Heart right ventricle (tissue), 16 donors: ENCODE measurements at regions of chr1 and their contacts with region 1.

Region 1: DNA sequence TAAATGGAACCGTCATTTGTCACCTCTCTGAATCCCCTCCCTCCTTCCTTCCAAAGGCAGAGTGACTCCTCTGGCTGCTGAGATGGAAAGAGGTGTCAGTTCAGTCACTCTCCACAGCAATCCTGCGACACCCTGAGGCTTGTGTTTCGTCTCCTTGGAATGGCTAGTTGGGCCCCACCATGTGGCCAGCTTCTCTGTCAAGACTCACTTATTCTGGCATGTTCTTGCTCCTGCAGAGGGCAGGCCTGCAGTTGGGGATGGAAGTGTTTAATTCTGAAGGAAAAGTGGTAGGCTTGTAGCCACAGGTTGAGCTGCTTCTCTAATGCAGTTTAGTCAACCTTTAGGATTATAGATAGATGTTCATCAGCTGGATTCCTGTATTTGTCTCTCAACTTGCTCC is 149.6 kb downstream of the LMO4 start:
- DNase-seq: peak; percentile 19 to 27
- ATAC-seq: peak in 5 of 8 donors; percentile 42 to 75 (median 59)
- H3K4me3 ChIP-seq: no peak overlapping the region
- H3K27ac ChIP-seq: no peak overlapping the region
- H3K4me1 ChIP-seq: no peaks in the 10 kb centered on the region
- H3K27me3 ChIP-seq: no peaks in the 10 kb centered on the region
- CTCF ChIP-seq: peak in 5 of 9 donors; percentile 25 to 49 (median 45)

Region 2: DNA sequence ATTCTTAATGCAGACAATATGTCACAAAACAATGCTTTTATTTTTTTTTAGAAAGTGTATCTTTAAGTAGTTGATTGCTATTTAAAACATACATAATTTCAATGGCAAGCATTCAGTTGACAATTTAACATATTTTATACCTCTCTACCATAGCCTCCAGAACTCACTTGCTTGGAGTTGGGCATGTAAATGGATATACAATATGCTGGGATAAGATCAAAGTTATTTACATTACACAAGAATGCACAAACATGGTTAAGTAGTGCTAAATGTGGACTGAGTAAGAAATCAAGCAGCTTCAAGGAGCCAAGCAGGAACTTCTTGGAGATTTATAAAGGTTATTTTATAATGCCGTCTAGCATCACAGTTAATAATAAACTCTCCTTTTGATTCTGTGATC is 914.4 kb before region 1 on chr1:
- intact Hi-C with region 1: loop called in 1 of 10 experiments (anchors 5 kb)
- DNase-seq: no peak
- ATAC-seq: no peak
- H3K4me3 ChIP-seq: no peak overlapping the region
- H3K27ac ChIP-seq: no peak overlapping the region
- H3K4me1 ChIP-seq: no peaks in the 10 kb centered on the region
- H3K27me3 ChIP-seq: peaks cover 0 to 4% (median 0%) of the 10 kb centered on the region in 7 donors
- CTCF ChIP-seq: no peak